Pancreas (tissue), 10 donors: ENCODE measurements at regions of chr11 and their contacts with region 1.

Region 1: GRCh38 chr11:123478352-123478987 is 48.4 kb downstream of the GRAMD1B start:
- DNase-seq: peak in 4 of 6 donors; percentile 27 to 46 (median 34)
- ATAC-seq: peak; percentile 80 to 92 (median 90)
- H3K4me3 ChIP-seq: no peak overlapping the region
- H3K27ac ChIP-seq: no peak overlapping the region
- H3K4me1 ChIP-seq: no peaks in the 10 kb centered on the region
- H3K27me3 ChIP-seq: peaks cover 0 to 3% (median 0%) of the 10 kb centered on the region in 4 donors
- CTCF ChIP-seq: peak; percentile 32 to 62 (median 57)

Region 2: GRCh38 chr11:123301696-123302400 is 176.6 kb before region 1 on chr11:
- intact Hi-C with region 1: loop called in 2 of 3 experiments (anchors 10 kb)
- DNase-seq: peak; percentile 14 to 88 (median 54)
- ATAC-seq: peak; percentile 86 to 98 (median 94)
- H3K4me3 ChIP-seq: peak overlapping the region in 3 of 4 donors; percentile 12 to 42 (median 22)
- H3K27ac ChIP-seq: no peak overlapping the region
- H3K4me1 ChIP-seq: peaks cover 0 to 3% (median 0%) of the 10 kb centered on the region in 3 donors
- H3K27me3 ChIP-seq: peaks cover 0 to 17% (median 0%) of the 10 kb centered on the region in 4 donors
- CTCF ChIP-seq: peak; percentile 63 to 92 (median 80)

Region 3: GRCh38 chr11:123344790-123345357 is 133.6 kb before region 1 on chr11:
- intact Hi-C with region 1: no loop called
- DNase-seq: no peak
- ATAC-seq: no peak
- H3K4me3 ChIP-seq: no peak overlapping the region
- H3K27ac ChIP-seq: no peak overlapping the region
- H3K4me1 ChIP-seq: no peaks in the 10 kb centered on the region
- H3K27me3 ChIP-seq: no peaks in the 10 kb centered on the region
- CTCF ChIP-seq: no peak

Region 4: GRCh38 chr11:123407130-123407995 is 71.1 kb before region 1 on chr11:
- intact Hi-C with region 1: loop called in 2 of 3 experiments (anchors 5 kb)
- DNase-seq: peak in 4 of 6 donors; percentile 41 to 71 (median 54)
- ATAC-seq: peak; percentile 80 to 97 (median 90)
- H3K4me3 ChIP-seq: no peak overlapping the region
- H3K27ac ChIP-seq: no peak overlapping the region
- H3K4me1 ChIP-seq: no peaks in the 10 kb centered on the region
- H3K27me3 ChIP-seq: peaks cover 0 to 16% (median 0%) of the 10 kb centered on the region in 4 donors
- CTCF ChIP-seq: peak; percentile 21 to 53 (median 49)

Region 5: DNA sequence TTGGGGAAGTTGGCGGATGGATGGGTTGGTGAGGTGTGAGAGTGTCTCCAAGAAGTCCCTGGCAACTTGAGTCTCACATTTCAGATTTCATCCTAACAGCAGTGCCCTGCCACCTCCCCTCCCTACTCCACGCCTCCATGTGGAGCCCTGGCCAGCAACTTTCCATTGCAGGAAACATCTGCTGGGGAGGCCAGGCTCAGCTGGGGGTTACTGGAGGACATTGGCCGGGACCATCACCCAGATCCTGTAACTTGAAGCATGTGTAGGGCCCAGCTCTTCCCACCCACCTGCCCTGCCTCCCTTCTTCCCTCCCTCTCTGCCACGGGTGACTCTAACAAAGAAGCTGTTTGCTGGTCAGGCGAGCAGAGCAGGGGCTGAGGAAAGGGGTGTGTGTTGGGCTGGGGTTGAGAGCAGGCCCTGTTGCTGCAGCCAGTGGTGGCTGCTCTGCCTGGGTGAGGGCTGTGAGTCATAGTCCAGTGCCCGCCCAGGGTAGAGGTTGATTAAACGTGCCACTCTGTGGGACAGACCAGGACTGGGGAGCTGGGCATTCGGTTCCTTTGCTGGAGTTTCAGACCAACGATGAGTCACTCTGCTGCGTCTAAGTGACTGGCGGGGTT is 111.9 kb after region 1 on chr11:
- intact Hi-C with region 1: no loop called
- DNase-seq: peak in 4 of 6 donors; percentile 31 to 56 (median 40)
- ATAC-seq: peak; percentile 76 to 86 (median 80)
- H3K4me3 ChIP-seq: no peak overlapping the region
- H3K27ac ChIP-seq: peak overlapping the region in 2 of 4 donors; percentile 62 to 71
- H3K4me1 ChIP-seq: peaks cover 0 to 3% (median 0%) of the 10 kb centered on the region in 3 donors
- H3K27me3 ChIP-seq: no peaks in the 10 kb centered on the region
- CTCF ChIP-seq: no peak

Region 6: DNA sequence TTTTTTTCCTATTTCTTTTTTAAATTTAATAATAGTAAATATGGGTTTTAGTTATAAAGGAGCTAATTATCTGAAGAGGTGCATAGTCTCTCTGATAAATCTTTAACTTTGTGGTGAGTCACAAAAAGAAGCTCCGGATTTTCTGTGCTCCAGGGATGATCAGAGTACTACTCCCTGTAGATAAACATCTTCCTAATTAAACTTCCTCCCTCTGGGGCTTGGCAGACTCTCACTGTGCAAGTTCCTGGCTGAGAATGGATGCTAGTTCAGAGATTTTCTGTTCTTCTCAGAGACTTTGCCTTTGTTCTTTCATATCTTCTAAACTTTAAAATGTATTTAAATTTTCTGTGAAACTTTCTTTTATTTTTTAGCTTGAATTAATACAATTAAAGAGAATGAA is 562.8 kb after region 1 on chr11 and contains the start of gene OR10G7:
- intact Hi-C with region 1: no loop called
- DNase-seq: no peak
- ATAC-seq: no peak
- H3K4me3 ChIP-seq: no peak within 1 kb of the TSS
- H3K27ac ChIP-seq: no peak within 1 kb of the TSS
- H3K4me1 ChIP-seq: peaks cover 0 to 6% (median 0%) of the 10 kb centered on the region in 3 donors
- H3K27me3 ChIP-seq: no peaks in the 10 kb centered on the region
- CTCF ChIP-seq: no peak
- total RNA-seq, gene OR10G7: not detected